ENCODE measurements at regions of chrX and their contacts with region 1.

Region 1: DNA sequence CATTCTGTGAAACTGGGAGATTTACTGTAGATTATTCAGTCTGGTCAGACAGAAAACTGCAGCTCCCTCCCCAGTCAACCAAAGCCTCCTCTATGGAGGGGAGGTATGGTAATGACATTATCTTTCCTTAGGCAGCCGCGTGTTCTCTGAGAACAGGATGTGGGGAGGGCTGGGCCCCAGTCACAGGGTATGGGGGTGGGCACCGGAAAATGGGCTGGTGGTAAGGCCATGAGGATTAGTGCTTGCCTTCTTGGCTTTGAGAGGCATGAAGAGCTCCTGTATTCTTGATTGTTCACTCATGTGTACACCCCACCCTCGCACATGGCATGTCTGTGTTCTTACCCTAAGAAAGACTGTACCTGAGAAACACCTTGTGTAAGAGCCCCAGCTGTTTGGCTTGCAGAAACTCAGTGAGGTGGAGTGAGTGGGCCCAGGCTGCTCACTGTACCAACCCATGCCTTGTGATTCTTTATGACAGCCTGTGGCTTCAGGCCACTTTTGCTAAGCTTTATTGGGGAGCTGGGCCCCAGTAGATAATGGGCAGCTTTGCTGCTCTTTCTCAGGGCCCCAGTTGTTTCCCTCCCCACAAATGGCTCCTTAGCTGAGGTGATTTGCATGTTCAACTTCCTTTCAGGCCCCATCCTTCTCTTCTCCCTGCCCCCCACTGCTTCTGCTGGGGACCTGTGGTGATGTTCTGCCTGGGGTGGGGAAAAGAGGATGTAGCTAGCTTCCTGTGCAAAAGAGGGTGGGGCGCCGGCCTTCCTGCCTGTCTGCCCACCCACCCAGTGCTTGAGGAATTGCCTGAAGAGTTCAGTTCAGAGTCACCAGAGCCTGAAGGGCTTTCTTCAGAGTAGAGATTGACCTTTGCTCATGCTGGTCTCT is 30.7 kb downstream of the MSN start:
- DNase-seq: peak; percentile 49 to 79
- ATAC-seq: peak; percentile 59 to 80 (median 68)
- H3K4me3 ChIP-seq: peak overlapping the region; percentile 3
- H3K4me3 Mint-ChIP-seq: peak overlapping the region; percentile 81
- H3K27ac ChIP-seq: peak overlapping the region; percentile 85
- H3K27ac Mint-ChIP-seq: peak overlapping the region; percentile 86 to 98
- H3K4me1 ChIP-seq: peaks cover 85% of the 10 kb centered on the region
- H3K4me1 Mint-ChIP-seq: peaks cover 83 to 96% of the 10 kb centered on the region in 2 donors
- H3K27me3 ChIP-seq: no peaks in the 10 kb centered on the region
- H3K27me3 Mint-ChIP-seq: no peaks in the 10 kb centered on the region
- CTCF ChIP-seq: no peak

Region 2: GRCh38 chrX:65667503-65668376 is 30.4 kb before region 1 on chrX and contains the start of gene MSN:
- intact Hi-C with region 1: loop called (anchors 2 kb)
- DNase-seq: peak; percentile 69 to 80
- ATAC-seq: peak; percentile 69 to 89 (median 86)
- H3K4me3 ChIP-seq: peak within 1 kb of the TSS; percentile 96
- H3K4me3 Mint-ChIP-seq: peak within 1 kb of the TSS; percentile 86
- H3K27ac ChIP-seq: peak within 1 kb of the TSS; percentile 88
- H3K27ac Mint-ChIP-seq: peak within 1 kb of the TSS; percentile 94 to 97
- H3K4me1 ChIP-seq: peaks cover 18% of the 10 kb centered on the region
- H3K4me1 Mint-ChIP-seq: peaks cover 56 to 75% of the 10 kb centered on the region in 2 donors
- H3K27me3 ChIP-seq: no peaks in the 10 kb centered on the region
- H3K27me3 Mint-ChIP-seq: no peaks in the 10 kb centered on the region
- CTCF ChIP-seq: no peak
- total RNA-seq, gene MSN: 866 to 1,028 (median 919) TPM

Region 3: DNA sequence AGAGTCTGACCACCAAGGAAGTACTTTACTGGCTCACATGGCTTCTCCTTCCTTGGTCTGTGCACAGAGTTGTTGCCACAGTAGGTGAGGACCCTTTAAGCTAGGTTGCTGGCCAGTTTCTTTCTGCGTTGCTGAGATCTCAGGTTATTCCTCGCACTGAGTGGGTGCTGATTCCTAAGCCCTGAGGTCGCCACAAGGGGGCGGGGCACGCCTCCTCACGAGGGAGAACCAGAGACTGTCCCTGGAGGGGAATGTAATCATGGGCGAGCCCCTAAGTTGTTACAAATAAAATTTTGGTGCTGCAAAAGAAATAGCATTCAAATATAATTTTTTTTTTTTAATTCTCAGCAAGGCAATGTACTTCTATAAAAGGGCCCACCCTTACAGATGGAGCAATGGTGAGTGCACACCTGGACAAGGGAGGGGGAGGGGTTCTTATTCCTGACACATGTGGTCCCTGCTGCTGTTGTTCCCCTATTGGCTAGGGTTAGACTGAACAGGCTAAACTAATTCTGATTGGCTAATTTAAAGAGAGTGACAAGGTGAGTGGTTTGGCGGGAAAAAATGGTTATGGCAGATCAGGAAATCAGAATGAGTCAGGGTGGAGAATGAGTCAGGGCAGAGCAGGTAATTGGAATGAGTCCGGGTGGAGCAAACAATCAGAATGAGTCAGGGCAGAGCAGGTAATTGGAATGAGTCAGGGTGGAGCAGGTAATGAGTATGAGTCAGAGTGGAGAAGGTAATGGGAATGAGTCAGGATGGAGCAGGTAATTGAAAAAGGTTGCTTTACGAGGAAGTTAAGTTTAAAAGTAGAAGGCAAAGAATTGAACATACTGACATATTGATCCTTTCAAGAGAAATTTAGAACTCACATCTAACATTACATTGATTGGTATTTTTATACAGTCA is 234.3 kb after region 1 on chrX:
- intact Hi-C with region 1: no loop called
- DNase-seq: no peak
- ATAC-seq: no peak
- H3K4me3 ChIP-seq: no peak overlapping the region
- H3K4me3 Mint-ChIP-seq: no peak overlapping the region
- H3K27ac ChIP-seq: no peak overlapping the region
- H3K27ac Mint-ChIP-seq: peak overlapping the region in 1 of 2 donors; percentile 49
- H3K4me1 ChIP-seq: peaks cover under 1% of the 10 kb centered on the region
- H3K4me1 Mint-ChIP-seq: peaks cover 5% of the 10 kb centered on the region in 2 donors
- H3K27me3 ChIP-seq: no peaks in the 10 kb centered on the region
- H3K27me3 Mint-ChIP-seq: peaks cover 0 to 7% of the 10 kb centered on the region in 2 donors
- CTCF ChIP-seq: no peak